ENCODE measurements at regions of chr14 and their contacts with region 1.

Region 1: DNA sequence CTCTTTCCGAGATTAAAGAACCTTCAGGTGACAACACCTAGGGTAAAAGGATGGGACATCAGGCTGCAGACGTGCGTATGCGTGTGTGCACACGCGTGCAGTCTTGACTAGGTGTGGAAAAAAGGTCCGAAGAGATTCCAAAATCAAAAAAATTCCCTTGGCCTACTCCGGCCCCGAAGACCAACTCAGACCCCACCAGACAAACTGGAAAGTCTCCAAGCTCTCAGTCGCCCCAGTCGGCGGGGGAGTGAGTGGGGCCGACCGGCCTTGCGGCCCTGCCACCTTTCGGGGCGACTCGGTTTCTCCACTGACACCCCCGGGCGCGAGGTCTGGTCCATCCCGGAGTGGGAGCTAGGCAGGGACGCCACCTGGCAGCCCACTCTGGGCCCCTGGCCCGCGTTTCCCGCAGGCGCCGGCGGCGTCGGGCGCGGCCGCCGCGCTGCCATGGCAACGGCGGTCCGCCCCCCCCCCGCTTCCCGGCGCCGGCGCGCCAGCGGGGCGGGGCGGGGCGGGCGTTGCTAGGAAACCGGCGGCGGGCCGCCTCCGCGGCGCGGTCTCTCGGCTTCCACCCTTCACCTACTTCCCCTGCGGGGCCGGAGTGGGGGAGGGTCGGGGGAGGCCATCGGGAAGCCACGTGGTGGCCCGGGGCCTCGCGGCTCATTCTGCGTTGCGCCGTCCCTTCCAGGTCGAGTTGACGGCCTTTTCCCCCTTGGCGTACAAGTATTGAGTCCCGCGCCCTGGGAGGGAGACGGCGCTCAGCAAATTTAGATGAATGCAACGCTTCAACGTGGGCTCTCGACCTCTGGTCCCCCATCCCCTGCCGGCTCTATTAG is 253.1 kb downstream of the EFCAB11 start:
- DNase-seq: peak; percentile 70 to 92 (median 80)
- ATAC-seq: peak; percentile 86
- H3K4me3 ChIP-seq: peak overlapping the region; percentile 62
- H3K4me3 Mint-ChIP-seq: peak overlapping the region; percentile 87
- H3K27ac ChIP-seq: peak overlapping the region; percentile 58 to 70
- H3K27ac Mint-ChIP-seq: peak overlapping the region; percentile 82
- H3K4me1 ChIP-seq: peaks cover 26% of the 10 kb centered on the region
- H3K4me1 Mint-ChIP-seq: peaks cover 49% of the 10 kb centered on the region
- H3K27me3 ChIP-seq: no peaks in the 10 kb centered on the region
- H3K27me3 Mint-ChIP-seq: no peaks in the 10 kb centered on the region
- CTCF ChIP-seq: no peak

Region 2: DNA sequence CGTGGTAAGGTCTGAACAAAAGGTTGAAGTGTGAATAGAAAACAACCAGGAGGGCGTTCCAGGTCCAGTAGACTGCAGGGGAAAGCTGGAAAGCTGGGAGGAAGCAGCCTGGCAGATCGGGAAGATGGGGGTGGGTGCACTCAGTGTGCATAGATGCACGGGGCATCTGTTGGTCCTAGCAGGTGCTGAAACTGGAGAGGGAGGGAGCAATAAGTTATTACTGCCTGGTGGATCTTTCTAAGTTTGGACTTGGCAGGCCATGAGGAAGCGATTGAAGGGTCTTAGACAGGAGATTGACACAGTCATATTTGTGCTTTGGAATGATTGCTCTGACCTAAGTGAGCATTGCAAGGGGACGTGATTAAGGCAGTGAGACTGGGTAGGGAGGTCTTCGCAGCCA is 58.7 kb after region 1 on chr14:
- CTCF ChIA-PET with region 1: no interaction called
- POLR2A ChIA-PET with region 1: no interaction called
- intact Hi-C with region 1: loop called in 1 of 2 experiments (anchors 5 kb)
- DNase-seq: no peak
- ATAC-seq: no peak
- H3K4me3 ChIP-seq: no peak overlapping the region
- H3K4me3 Mint-ChIP-seq: no peak overlapping the region
- H3K27ac ChIP-seq: no peak overlapping the region
- H3K27ac Mint-ChIP-seq: no peak overlapping the region
- H3K4me1 ChIP-seq: no peaks in the 10 kb centered on the region
- H3K4me1 Mint-ChIP-seq: peaks cover 19% of the 10 kb centered on the region
- H3K27me3 ChIP-seq: no peaks in the 10 kb centered on the region
- H3K27me3 Mint-ChIP-seq: no peaks in the 10 kb centered on the region
- CTCF ChIP-seq: no peak

Measured in CD4-positive, alpha-beta T cell (primary cell).